ENCODE measurements at regions of chr2 and their contacts with region 1.

Region 1: DNA sequence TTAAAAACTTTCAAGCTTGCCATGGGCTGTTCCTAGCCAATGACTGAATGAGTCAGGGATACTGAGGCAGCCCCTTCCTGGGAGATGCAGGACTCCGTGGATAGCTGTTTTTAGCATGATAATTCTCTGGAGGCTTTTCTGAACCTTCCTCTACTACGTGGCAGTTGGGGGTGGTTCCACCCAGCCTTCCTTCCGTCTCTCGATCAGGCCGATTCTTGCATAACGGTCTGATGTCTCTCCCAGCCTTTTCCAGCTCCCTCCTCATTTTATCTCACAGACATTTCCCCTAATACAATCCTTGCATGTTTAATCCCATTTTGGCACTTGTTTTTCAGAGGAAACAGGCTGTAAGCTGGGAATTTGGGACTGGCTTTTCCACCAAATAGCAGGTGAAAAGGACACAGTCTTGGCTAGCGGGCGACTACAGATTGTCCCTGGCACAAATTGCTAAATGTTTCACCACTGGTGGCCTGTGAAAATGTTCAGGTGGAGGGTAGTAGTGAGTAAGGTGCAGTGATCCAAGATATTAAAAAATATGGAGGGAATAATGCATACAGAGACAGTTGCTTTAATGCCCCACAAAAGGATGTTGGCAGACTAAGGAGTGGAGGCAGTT is 21.0 kb upstream of the CTLA4 start:
- DNase-seq: no peak
- ATAC-seq: no peak
- H3K4me3 ChIP-seq: no peak overlapping the region
- H3K4me3 Mint-ChIP-seq: no peak overlapping the region
- H3K27ac ChIP-seq: no peak overlapping the region
- H3K27ac Mint-ChIP-seq: no peak overlapping the region
- H3K4me1 ChIP-seq: no peaks in the 10 kb centered on the region
- H3K4me1 Mint-ChIP-seq: no peaks in the 10 kb centered on the region
- H3K27me3 ChIP-seq: no peaks in the 10 kb centered on the region
- H3K27me3 Mint-ChIP-seq: no peaks in the 10 kb centered on the region
- CTCF ChIP-seq: no peak

Region 2: DNA sequence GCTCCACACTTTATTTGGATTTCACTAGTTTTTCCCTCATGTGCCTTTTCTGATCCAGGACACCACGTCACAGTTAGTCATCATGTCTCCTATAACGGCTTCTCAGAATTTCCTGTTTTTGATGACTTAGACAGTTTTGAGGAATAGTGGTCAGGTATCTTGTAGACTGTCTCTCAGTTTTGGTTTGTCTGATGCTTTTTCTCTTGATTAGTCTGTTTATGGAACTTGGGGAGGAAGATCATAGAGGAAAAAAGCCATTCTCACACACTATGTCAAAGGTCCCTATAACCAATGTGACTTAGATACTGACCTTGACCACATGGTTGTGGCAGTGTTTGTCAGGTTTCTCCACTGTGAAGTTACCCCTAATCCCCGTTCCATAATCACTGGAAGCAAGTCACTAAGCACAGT is 400.5 kb before region 1 on chr2:
- CTCF ChIA-PET with region 1: no interaction called
- POLR2A ChIA-PET with region 1: no interaction called
- intact Hi-C with region 1: no loop called
- DNase-seq: peak in 2 of 14 experiments; percentile 9 to 20
- ATAC-seq: no peak
- H3K4me3 ChIP-seq: no peak overlapping the region
- H3K4me3 Mint-ChIP-seq: no peak overlapping the region
- H3K27ac ChIP-seq: no peak overlapping the region
- H3K27ac Mint-ChIP-seq: no peak overlapping the region
- H3K4me1 ChIP-seq: no peaks in the 10 kb centered on the region
- H3K4me1 Mint-ChIP-seq: no peaks in the 10 kb centered on the region
- H3K27me3 ChIP-seq: no peaks in the 10 kb centered on the region
- H3K27me3 Mint-ChIP-seq: no peaks in the 10 kb centered on the region
- CTCF ChIP-seq: no peak

Region 3: GRCh38 chr2:203880557-203881125 is 34.0 kb after region 1 on chr2:
- CTCF ChIA-PET with region 1: no interaction called
- POLR2A ChIA-PET with region 1: no interaction called
- intact Hi-C with region 1: no loop called
- DNase-seq: no peak
- ATAC-seq: no peak
- H3K4me3 ChIP-seq: no peak overlapping the region
- H3K4me3 Mint-ChIP-seq: no peak overlapping the region
- H3K27ac ChIP-seq: no peak overlapping the region
- H3K27ac Mint-ChIP-seq: no peak overlapping the region
- H3K4me1 ChIP-seq: peaks cover 24% of the 10 kb centered on the region
- H3K4me1 Mint-ChIP-seq: peaks cover 22% of the 10 kb centered on the region
- H3K27me3 ChIP-seq: no peaks in the 10 kb centered on the region
- H3K27me3 Mint-ChIP-seq: no peaks in the 10 kb centered on the region
- CTCF ChIP-seq: no peak

Region 4: DNA sequence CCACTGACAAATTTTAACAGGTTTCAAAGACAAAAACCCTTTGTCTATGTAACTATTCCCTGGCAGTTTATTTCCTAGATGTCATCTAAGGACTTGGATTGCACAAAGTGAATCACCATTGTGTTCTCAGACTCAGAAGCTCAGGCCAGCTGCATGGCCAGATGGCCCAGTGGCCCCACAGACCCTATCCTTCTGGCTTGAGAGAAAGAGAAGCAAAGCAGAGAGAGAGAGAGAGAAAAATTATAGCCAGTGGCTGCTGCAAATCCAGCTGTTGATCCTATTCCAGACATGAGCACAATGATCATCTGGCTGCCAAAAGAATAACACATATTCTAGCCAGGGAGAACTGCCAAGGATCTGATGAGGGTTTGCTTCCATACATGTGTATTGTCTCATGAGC is 46.8 kb after region 1 on chr2:
- CTCF ChIA-PET with region 1: no interaction called
- POLR2A ChIA-PET with region 1: no interaction called
- intact Hi-C with region 1: loop called in 1 of 2 experiments (anchors 5 kb)
- DNase-seq: no peak
- ATAC-seq: no peak
- H3K4me3 ChIP-seq: no peak overlapping the region
- H3K4me3 Mint-ChIP-seq: no peak overlapping the region
- H3K27ac ChIP-seq: no peak overlapping the region
- H3K27ac Mint-ChIP-seq: no peak overlapping the region
- H3K4me1 ChIP-seq: no peaks in the 10 kb centered on the region
- H3K4me1 Mint-ChIP-seq: peaks cover 12% of the 10 kb centered on the region
- H3K27me3 ChIP-seq: no peaks in the 10 kb centered on the region
- H3K27me3 Mint-ChIP-seq: no peaks in the 10 kb centered on the region
- CTCF ChIP-seq: no peak

Measured in CD4-positive, alpha-beta T cell (primary cell).